Heart right ventricle (tissue), 16 donors: ENCODE measurements at regions of chr7 and their contacts with region 1.

Region 1: DNA sequence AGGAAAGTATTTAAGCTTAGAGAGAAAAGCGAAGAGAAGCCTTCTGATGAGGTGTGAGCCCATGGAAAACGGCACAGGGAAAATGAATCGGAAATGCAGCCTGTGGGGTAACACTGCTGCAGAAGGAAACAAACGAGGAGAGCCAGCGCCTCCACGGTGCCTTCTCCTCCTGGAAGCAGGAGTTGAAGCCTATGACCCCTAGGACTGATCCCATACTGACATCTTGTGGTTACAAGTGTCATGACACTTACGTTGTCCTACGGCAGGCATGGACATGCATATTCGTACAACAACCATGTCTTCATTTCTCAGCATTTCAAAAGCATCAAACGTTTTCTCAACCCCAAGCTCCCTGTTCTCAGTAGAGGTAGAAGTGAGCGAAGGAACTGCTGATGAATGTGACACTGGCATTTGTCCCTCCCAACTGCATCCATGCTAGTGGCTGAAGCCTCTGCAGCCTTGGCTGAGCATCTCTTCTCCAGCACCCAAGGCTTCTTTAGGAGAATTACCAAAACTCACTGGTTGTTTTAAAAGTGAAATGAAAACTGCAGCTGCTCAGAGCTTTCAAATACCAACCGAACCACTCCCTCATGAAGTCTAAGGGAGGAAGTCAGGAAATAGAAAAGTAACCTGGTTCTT is 160.2 kb downstream of the JAZF1 start:
- DNase-seq: peak; percentile 49 to 63
- ATAC-seq: peak; percentile 73 to 90 (median 82)
- H3K4me3 ChIP-seq: no peak overlapping the region
- H3K27ac ChIP-seq: no peak overlapping the region
- H3K4me1 ChIP-seq: peaks cover 3 to 57% (median 21%) of the 10 kb centered on the region in 9 donors
- H3K27me3 ChIP-seq: no peaks in the 10 kb centered on the region
- CTCF ChIP-seq: peak; percentile 74 to 95 (median 87)

Region 2: GRCh38 chr7:27793780-27794179 is 226.6 kb before region 1 on chr7:
- intact Hi-C with region 1: loop called in 1 of 10 experiments (anchors 10 kb)
- DNase-seq: no peak
- ATAC-seq: no peak
- H3K4me3 ChIP-seq: no peak overlapping the region
- H3K27ac ChIP-seq: no peak overlapping the region
- H3K4me1 ChIP-seq: no peaks in the 10 kb centered on the region
- H3K27me3 ChIP-seq: no peaks in the 10 kb centered on the region
- CTCF ChIP-seq: no peak

Region 3: DNA sequence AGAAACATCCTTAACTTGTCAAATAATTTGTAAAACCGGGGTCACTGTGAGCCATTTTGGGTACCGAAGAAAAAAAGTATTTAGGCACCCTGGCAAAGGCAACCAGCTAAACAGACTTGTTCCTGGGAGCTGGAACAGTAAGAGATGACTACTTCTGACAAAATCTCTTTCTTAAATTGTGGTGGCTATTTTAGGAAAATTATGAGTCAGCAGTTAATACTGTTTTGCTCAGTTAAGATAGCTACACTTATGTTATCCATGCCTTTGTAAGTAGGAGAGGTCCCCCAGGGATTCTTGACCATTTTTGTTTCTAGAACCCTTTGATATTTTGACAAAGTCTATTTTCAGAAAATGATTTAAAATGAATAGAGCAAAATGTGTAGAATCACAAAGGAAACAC is 211.8 kb before region 1 on chr7:
- intact Hi-C with region 1: loop called in 2 of 10 experiments (anchors 10 kb)
- DNase-seq: no peak
- ATAC-seq: peak in 7 of 8 donors; percentile 38 to 83 (median 80)
- H3K4me3 ChIP-seq: no peak overlapping the region
- H3K27ac ChIP-seq: peak overlapping the region in 5 of 10 donors; percentile 17 to 54 (median 41)
- H3K4me1 ChIP-seq: peaks cover 0 to 20% (median 9%) of the 10 kb centered on the region in 9 donors
- H3K27me3 ChIP-seq: no peaks in the 10 kb centered on the region
- CTCF ChIP-seq: no peak

Region 4: GRCh38 chr7:27947586-27948278 is 72.7 kb before region 1 on chr7:
- intact Hi-C with region 1: loop called in 1 of 10 experiments (anchors 5 kb)
- DNase-seq: no peak
- ATAC-seq: no peak
- H3K4me3 ChIP-seq: no peak overlapping the region
- H3K27ac ChIP-seq: no peak overlapping the region
- H3K4me1 ChIP-seq: peaks cover 0 to 77% (median 36%) of the 10 kb centered on the region in 9 donors
- H3K27me3 ChIP-seq: no peaks in the 10 kb centered on the region
- CTCF ChIP-seq: no peak